K562 (cell line): ENCODE measurements at regions of chr1 and their contacts with region 1.

Region 1: DNA sequence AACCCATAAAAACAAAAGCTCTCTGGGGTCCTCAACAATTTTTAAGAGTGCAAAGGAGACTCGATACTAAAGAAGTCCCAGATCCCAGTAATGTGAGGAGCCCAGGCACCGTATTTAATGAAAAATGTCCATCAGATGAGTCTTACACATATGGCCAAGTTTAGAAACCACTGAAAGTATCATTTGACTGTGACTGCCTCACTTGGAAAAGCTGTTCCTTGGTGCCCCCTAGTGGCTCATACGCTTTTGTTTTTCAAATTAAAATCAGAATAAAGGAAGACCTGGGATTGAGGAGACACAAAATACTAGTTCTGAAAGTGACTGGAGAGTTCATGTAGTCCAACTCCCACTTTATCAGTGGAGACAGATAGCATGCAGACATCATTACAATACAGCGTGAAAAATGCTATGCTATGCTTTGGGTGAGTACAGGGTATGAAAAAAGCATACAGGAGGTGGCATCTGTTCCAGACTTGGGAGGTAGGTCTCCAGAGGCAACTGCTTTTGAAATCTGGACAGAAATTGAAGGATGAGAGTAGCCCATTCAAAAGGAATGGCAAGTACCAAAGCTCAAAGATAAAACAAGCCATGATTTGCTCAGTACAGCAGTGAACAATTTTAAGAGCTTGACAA is 33.8 kb downstream of the GDAP2 start:
- DNase-seq: peak; percentile 53 to 83 (median 54)
- ATAC-seq: peak; percentile 79
- H3K4me3 ChIP-seq: no peak overlapping the region
- H3K27ac ChIP-seq: no peak overlapping the region
- H3K4me1 ChIP-seq: no peaks in the 10 kb centered on the region
- H3K27me3 ChIP-seq: no peaks in the 10 kb centered on the region
- CTCF ChIP-seq: peak; percentile 73 to 90 (median 82)
- EP300 ChIP-seq: no peak
- POLR2A ChIP-seq: no peak
- RAD21 ChIP-seq: peak; percentile 74 to 84

Region 2: GRCh38 chr1:117512743-117513321 is 382.8 kb before region 1 on chr1:
- CTCF ChIA-PET with region 1: interaction called, 12 read pairs
- POLR2A ChIA-PET with region 1: no interaction called
- in situ Hi-C with region 1: no loop called
- intact Hi-C with region 1: loop called (anchors 1 kb)
- DNase-seq: peak; percentile 22 to 32 (median 26)
- ATAC-seq: peak; percentile 62; the same call in 2 of the 3 replicates
- H3K4me3 ChIP-seq: no peak overlapping the region
- H3K27ac ChIP-seq: no peak overlapping the region
- H3K4me1 ChIP-seq: no peaks in the 10 kb centered on the region
- H3K27me3 ChIP-seq: no peaks in the 10 kb centered on the region
- CTCF ChIP-seq: peak; percentile 43 to 90 (median 49); a peak in 4 of 6 replicates
- EP300 ChIP-seq: no peak
- POLR2A ChIP-seq: no peak
- RAD21 ChIP-seq: peak; percentile 90 to 94

Region 3: GRCh38 chr1:117695796-117696490 is 199.7 kb before region 1 on chr1:
- CTCF ChIA-PET with region 1: no interaction called
- POLR2A ChIA-PET with region 1: no interaction called
- in situ Hi-C with region 1: no loop called
- intact Hi-C with region 1: loop called (anchors 10 kb)
- DNase-seq: peak in 2 of 4 experiments; percentile 45 to 49
- ATAC-seq: peak; percentile 58
- H3K4me3 ChIP-seq: no peak overlapping the region
- H3K27ac ChIP-seq: no peak overlapping the region
- H3K4me1 ChIP-seq: peaks cover 9 to 39% of the 10 kb centered on the region in 2 experiments
- H3K27me3 ChIP-seq: no peaks in the 10 kb centered on the region
- CTCF ChIP-seq: no peak
- EP300 ChIP-seq: no peak
- POLR2A ChIP-seq: no peak
- RAD21 ChIP-seq: no peak

Region 4: GRCh38 chr1:117803318-117803717 is 92.3 kb before region 1 on chr1:
- CTCF ChIA-PET with region 1: no interaction called
- POLR2A ChIA-PET with region 1: no interaction called
- in situ Hi-C with region 1: no loop called
- intact Hi-C with region 1: no loop called
- DNase-seq: no peak
- ATAC-seq: no peak
- H3K4me3 ChIP-seq: no peak overlapping the region
- H3K27ac ChIP-seq: no peak overlapping the region
- H3K4me1 ChIP-seq: no peaks in the 10 kb centered on the region
- H3K27me3 ChIP-seq: no peaks in the 10 kb centered on the region; a peak in 1 of 5 replicates
- CTCF ChIP-seq: no peak
- EP300 ChIP-seq: no peak
- POLR2A ChIP-seq: no peak
- RAD21 ChIP-seq: no peak

Region 5: GRCh38 chr1:117815926-117816325 is 79.7 kb before region 1 on chr1:
- CTCF ChIA-PET with region 1: interaction called, 3 read pairs
- POLR2A ChIA-PET with region 1: no interaction called
- in situ Hi-C with region 1: no loop called
- intact Hi-C with region 1: loop called (anchors 1 kb)
- DNase-seq: peak; percentile 28 to 44 (median 36)
- ATAC-seq: peak; percentile 91
- H3K4me3 ChIP-seq: no peak overlapping the region
- H3K27ac ChIP-seq: no peak overlapping the region
- H3K4me1 ChIP-seq: no peaks in the 10 kb centered on the region
- H3K27me3 ChIP-seq: peaks cover 0 to 17% of the 10 kb centered on the region in 2 experiments; a peak in 2 of 5 replicates
- CTCF ChIP-seq: peak; percentile 66 to 75 (median 67)
- EP300 ChIP-seq: no peak
- POLR2A ChIP-seq: no peak
- RAD21 ChIP-seq: peak; percentile 61 to 87

Region 6: DNA sequence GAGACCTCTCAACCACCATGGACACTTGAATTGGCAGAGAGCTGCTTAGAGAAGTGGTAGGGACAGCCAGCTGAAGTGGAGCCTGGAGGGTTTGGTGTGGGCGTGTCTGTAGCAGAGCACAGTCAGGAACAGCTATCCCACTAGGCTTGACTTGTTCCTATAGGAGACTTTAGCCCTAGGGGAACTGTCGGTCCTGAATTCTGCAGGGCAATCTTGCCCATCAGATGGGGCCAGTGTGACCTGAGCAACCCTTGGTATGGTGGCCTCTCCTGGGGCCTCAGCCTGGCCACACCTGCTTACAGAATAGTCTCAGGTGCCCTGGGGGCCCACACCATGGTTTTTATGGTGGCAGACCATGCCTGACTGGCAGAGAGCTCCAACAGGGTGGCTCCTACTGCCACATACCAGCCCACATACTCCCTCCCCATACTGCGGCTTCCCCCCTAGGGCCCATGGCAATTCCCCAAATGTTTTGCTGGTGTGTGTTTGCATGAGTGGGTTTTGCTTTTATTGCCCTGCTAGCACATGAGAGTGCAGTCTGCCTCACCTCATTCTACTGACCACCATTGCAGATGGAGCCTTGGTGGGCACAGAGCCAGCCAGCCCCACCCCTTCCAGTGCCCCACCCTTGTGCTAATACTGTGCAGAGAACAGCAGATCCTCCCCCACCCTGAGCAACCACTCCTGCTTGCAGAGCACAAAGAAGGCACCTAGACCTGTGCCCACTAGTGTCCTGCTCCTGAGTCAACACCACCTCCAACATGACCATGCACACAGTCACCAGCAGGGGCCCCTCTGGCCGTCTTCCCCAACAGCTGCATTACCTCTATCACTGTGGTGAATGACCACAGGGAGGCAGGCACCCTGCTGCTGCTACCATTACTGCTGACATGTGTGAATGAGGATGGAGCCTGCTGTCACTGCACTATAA is 53.1 kb before region 1 on chr1:
- CTCF ChIA-PET with region 1: no interaction called
- POLR2A ChIA-PET with region 1: no interaction called
- in situ Hi-C with region 1: no loop called
- intact Hi-C with region 1: loop called (anchors 1 kb)
- DNase-seq: peak in 3 of 4 experiments; percentile 33 to 39 (median 33)
- ATAC-seq: peak; percentile 99
- H3K4me3 ChIP-seq: no peak overlapping the region
- H3K27ac ChIP-seq: no peak overlapping the region
- H3K4me1 ChIP-seq: no peaks in the 10 kb centered on the region; a peak in 1 of 5 replicates
- H3K27me3 ChIP-seq: no peaks in the 10 kb centered on the region
- CTCF ChIP-seq: peak; percentile 53 to 98 (median 72)
- EP300 ChIP-seq: no peak
- POLR2A ChIP-seq: no peak
- RAD21 ChIP-seq: peak in 1 of 2 experiments; percentile 50; a peak in 2 of 4 replicates